Activated CD4-positive, alpha-beta T cell treated with anti-CD3 and anti-CD28 coated beads for 36 hours (primary cell): ENCODE measurements at regions of chr15 and their contacts with region 1.

Region 1: GRCh38 chr15:78422571-78423340 is 15.3 kb upstream of the IREB2 start:
- DNase-seq: peak; percentile 80
- ATAC-seq: peak; percentile 83
- H3K4me3 Mint-ChIP-seq: no peak overlapping the region
- H3K27ac Mint-ChIP-seq: no peak overlapping the region
- H3K4me1 Mint-ChIP-seq: peaks cover 18% of the 10 kb centered on the region
- H3K27me3 Mint-ChIP-seq: no peaks in the 10 kb centered on the region

Region 2: DNA sequence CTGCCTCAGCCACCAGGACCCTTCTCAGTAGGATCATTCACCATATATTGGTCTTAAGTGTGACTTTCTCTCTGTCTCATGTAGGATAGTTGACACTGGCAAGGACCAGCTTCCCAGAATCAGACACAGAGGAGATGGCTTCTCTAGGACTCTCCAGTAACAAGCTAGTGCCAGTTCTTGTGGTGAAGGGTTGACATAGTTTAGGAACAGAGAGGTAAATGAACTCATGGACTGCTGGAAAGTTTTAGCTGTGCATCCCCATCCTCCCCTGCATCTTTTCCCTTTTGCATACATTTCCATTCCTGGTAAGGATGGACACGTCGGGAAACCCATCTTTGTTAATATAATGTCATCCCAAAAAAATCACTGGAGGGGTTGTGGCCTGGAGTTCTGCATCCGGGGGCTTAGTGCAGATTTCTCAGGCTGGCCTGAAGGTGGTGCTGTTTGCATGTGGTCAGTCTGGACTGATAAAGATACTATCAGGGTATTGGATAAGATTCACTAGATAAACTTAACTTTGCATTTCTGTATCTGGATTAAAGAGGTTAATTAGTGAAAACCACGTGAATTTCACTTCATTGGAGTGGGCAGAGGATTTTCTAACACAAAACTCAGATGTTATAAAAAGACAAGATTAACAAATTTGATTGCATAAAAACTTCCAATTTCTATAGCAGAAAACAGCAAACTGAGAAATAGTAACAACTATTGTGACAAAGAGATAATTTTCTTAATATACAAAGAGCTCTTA is 456.0 kb before region 1 on chr15:
- CTCF ChIA-PET with region 1: interaction called, 3 read pairs
- POLR2A ChIA-PET with region 1: no interaction called
- intact Hi-C with region 1: loop called in 1 of 2 experiments (anchors 10 kb)
- DNase-seq: peak; percentile 71
- ATAC-seq: peak; percentile 75
- H3K4me3 Mint-ChIP-seq: no peak overlapping the region
- H3K27ac Mint-ChIP-seq: no peak overlapping the region
- H3K4me1 Mint-ChIP-seq: no peaks in the 10 kb centered on the region
- H3K27me3 Mint-ChIP-seq: peaks cover 2% of the 10 kb centered on the region

Region 3: DNA sequence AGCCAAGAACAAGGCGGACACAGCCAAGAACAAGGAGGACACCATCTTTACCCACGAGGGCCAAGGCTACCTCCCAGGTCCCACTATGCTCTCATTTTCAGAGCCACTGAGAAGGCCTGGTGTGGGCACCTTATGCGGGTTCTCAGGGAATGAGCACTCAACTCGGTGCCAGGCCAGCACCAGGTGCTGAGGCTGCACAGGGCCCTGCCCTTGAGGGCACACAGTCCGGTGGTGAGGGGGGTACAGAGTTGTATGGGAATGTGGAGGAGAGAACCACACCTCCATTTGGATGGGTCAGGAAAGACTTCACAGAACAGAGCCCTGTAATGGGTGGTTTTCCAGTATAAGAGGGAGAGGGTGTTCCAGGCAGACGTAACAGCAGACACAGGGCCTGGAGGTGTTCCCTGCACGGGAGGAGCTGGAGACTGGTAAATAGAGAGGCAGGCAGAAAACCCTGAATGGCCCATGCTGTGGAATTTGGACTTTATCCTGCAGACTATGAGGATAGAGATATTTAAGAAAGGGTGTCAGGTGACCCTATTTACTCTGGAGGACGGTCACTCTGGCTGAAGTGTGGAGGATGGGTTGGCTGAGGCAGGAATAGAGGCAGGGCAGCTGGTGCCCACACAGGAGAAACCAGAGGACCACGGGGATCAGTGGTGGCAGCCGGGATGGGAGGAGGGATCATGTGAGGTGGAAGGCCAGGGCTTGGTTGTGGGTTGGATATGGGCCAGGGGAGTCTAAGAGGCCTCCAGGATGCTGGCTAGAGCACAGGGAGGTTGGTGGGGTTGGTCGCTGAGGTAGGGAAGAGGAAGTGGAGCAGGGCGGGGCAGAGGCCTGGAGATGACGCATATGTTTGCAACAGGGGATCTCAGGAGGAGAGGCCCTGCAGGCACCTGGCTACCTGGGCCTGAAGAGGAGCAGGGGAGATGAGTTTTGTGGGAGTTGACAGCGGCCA is 48.0 kb before region 1 on chr15:
- CTCF ChIA-PET with region 1: no interaction called
- POLR2A ChIA-PET with region 1: no interaction called
- intact Hi-C with region 1: no loop called
- DNase-seq: peak; percentile 34
- ATAC-seq: peak; percentile 71
- H3K4me3 Mint-ChIP-seq: no peak overlapping the region
- H3K27ac Mint-ChIP-seq: no peak overlapping the region
- H3K4me1 Mint-ChIP-seq: peaks cover 8% of the 10 kb centered on the region
- H3K27me3 Mint-ChIP-seq: peaks cover 2% of the 10 kb centered on the region

Region 4: DNA sequence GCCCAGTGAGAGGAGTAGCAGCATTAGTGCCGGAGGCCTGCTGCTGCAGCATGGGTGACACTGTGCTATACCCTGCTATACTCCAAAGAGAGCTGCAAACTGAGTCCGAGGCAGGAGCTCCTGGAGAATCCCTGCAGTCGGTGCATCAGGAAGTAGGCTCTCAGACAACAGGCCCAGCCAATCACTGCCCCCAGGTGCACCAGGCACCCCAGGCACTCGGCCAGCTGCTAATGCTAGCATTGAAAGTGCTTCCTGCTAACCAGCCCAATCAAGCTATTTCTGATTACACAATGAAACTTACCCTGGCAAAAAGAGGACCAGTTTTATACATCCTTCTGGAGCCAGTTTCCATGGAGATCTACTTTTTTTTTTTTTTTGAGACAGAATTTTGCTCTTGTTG is 30.3 kb before region 1 on chr15:
- CTCF ChIA-PET with region 1: interaction called, 10 read pairs
- POLR2A ChIA-PET with region 1: no interaction called
- intact Hi-C with region 1: no loop called
- DNase-seq: no peak
- ATAC-seq: no peak
- H3K4me3 Mint-ChIP-seq: no peak overlapping the region
- H3K27ac Mint-ChIP-seq: no peak overlapping the region
- H3K4me1 Mint-ChIP-seq: no peaks in the 10 kb centered on the region
- H3K27me3 Mint-ChIP-seq: peaks cover 3% of the 10 kb centered on the region